Activated B cell treated with CpG ODN at 0.5 μM for 24 hours (primary cell): ENCODE measurements at regions of chr11 and their contacts with region 1.

Region 1: GRCh38 chr11:102614485-102614884 is 10.6 kb downstream of the MMP20 start:
- DNase-seq: no peak
- ATAC-seq: no peak
- H3K4me3 Mint-ChIP-seq: no peak overlapping the region
- H3K27ac Mint-ChIP-seq: no peak overlapping the region
- H3K4me1 Mint-ChIP-seq: peaks cover 32% of the 10 kb centered on the region
- H3K27me3 Mint-ChIP-seq: no peaks in the 10 kb centered on the region
- CTCF ChIP-seq: no peak

Region 2: DNA sequence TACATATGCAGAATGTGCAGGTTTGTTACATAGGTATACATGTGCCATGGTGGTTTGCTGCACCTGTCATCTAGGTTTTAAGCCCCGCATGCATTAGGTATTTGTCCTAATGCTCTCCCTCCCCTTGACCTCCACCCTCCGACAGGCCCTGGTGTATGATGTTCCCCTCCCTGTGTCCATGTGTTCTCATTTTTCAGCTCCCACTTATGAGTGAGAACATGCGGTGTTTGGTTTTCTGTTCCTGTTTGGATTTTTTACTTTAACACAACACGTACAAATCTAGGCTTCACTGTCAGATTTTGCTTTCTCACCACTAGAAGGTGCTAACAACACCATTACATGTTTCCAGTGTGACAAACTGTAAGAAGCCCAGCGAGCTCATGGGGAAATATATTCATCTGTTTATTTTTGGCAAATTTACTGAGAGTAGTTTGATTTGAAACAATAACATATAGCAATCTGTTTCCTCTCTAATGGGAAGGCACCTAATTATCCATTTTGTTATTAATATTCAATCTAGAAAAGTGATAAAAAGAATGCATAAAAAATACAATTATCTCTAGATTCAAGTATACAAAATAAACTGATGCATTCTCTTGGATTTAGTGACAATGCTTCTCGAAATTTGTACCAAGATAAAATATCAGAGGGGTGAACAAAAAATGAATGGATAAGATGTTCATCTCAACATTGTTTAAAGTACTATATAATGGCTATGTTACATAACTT is 320.4 kb before region 1 on chr11:
- CTCF ChIA-PET with region 1: interaction called, 58 read pairs
- POLR2A ChIA-PET with region 1: interaction called, 9 read pairs
- intact Hi-C with region 1: no loop called
- DNase-seq: peak; percentile 26
- ATAC-seq: peak; percentile 91
- H3K4me3 Mint-ChIP-seq: peak overlapping the region; percentile 84
- H3K27ac Mint-ChIP-seq: peak overlapping the region; percentile 94
- H3K4me1 Mint-ChIP-seq: peaks cover 72% of the 10 kb centered on the region
- H3K27me3 Mint-ChIP-seq: no peaks in the 10 kb centered on the region
- CTCF ChIP-seq: no peak

Region 3: DNA sequence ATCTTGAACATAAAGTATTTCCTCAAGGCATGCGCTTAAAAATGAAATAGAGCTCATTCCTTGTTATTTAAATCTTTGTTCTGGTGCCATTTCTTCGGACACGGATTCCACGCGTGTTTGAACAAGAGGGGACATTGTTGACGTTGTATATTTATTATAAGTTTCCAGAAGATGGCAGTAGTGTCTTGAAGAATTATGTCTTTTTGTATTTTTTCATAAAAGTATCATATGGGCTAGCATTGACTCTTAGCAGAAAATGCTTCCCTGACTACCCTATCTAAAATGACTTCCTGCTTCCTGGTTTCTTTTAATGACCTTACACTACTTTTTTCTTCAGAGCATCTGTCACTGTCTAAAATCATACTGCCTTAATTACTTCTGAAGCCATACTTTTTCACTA is 247.1 kb before region 1 on chr11:
- CTCF ChIA-PET with region 1: interaction called, 45 read pairs
- POLR2A ChIA-PET with region 1: interaction called, 3 read pairs
- intact Hi-C with region 1: loop called (anchors 1 kb)
- DNase-seq: no peak
- ATAC-seq: no peak
- H3K4me3 Mint-ChIP-seq: no peak overlapping the region
- H3K27ac Mint-ChIP-seq: peak overlapping the region; percentile 21
- H3K4me1 Mint-ChIP-seq: peaks cover 14% of the 10 kb centered on the region
- H3K27me3 Mint-ChIP-seq: no peaks in the 10 kb centered on the region
- CTCF ChIP-seq: no peak

Region 4: DNA sequence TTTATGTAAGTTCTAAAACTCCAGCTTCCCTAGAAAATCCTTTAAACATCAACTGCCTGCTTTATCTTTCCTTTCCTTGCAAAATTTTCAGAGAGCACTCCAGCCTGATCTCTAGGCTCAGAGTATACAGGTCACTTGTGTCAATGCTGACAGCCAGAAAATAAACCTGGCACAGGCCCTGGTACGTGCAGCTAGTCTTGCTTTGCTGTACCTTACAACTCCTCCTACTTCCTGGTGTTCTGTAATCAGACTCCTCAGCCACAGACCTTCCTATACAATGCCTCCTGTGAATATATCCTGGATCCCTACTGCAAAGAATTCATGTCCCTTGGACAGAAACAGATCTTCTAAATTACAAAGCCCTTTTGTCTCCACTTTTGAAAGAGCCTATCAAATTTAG is 137.7 kb before region 1 on chr11:
- CTCF ChIA-PET with region 1: interaction called, 10 read pairs
- POLR2A ChIA-PET with region 1: no interaction called
- intact Hi-C with region 1: no loop called
- DNase-seq: no peak
- ATAC-seq: no peak
- H3K4me3 Mint-ChIP-seq: peak overlapping the region; percentile 17
- H3K27ac Mint-ChIP-seq: peak overlapping the region; percentile 65
- H3K4me1 Mint-ChIP-seq: peaks cover 47% of the 10 kb centered on the region
- H3K27me3 Mint-ChIP-seq: no peaks in the 10 kb centered on the region
- CTCF ChIP-seq: no peak

Region 5: GRCh38 chr11:102546923-102547471 is 67.5 kb before region 1 on chr11:
- CTCF ChIA-PET with region 1: interaction called, 10 read pairs
- POLR2A ChIA-PET with region 1: interaction called, 7 read pairs
- intact Hi-C with region 1: loop called (anchors 1 kb)
- DNase-seq: peak; percentile 52
- ATAC-seq: peak; percentile 79
- H3K4me3 Mint-ChIP-seq: peak overlapping the region; percentile 52
- H3K27ac Mint-ChIP-seq: peak overlapping the region; percentile 91
- H3K4me1 Mint-ChIP-seq: peaks cover 72% of the 10 kb centered on the region
- H3K27me3 Mint-ChIP-seq: no peaks in the 10 kb centered on the region
- CTCF ChIP-seq: no peak

Region 6: GRCh38 chr11:102599642-102600261 is 14.7 kb before region 1 on chr11:
- CTCF ChIA-PET with region 1: interaction called, 10 read pairs
- POLR2A ChIA-PET with region 1: no interaction called
- intact Hi-C with region 1: loop called (anchors 1 kb)
- DNase-seq: no peak
- ATAC-seq: peak; percentile 93
- H3K4me3 Mint-ChIP-seq: no peak overlapping the region
- H3K27ac Mint-ChIP-seq: peak overlapping the region; percentile 32
- H3K4me1 Mint-ChIP-seq: peaks cover 28% of the 10 kb centered on the region
- H3K27me3 Mint-ChIP-seq: no peaks in the 10 kb centered on the region
- CTCF ChIP-seq: no peak

Region 7: DNA sequence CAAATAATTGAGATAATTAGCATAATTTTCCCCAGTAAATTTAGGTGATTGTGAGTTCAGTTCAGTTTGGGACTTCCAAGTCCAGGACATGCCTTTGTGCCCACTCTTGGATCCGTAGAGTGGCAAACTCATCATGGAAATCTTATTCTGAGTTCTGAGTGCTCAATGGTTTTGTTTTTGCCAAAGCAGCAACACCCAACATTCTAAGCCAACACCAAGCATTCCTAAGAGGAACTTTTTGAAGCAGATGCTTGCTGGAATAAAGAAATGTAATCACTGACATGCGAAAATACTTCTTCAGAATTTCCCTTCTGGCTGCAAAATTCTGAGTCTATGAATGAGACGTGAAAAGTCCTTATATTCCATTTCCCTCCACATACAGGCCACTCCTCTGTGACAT is 80.7 kb after region 1 on chr11:
- CTCF ChIA-PET with region 1: no interaction called
- POLR2A ChIA-PET with region 1: no interaction called
- intact Hi-C with region 1: no loop called
- DNase-seq: no peak
- ATAC-seq: no peak
- H3K4me3 Mint-ChIP-seq: no peak overlapping the region
- H3K27ac Mint-ChIP-seq: no peak overlapping the region
- H3K4me1 Mint-ChIP-seq: no peaks in the 10 kb centered on the region
- H3K27me3 Mint-ChIP-seq: peaks cover 14% of the 10 kb centered on the region
- CTCF ChIP-seq: no peak